Spleen (tissue), 13 donors: ENCODE measurements at regions of chr1 and their contacts with region 1.

Region 1: GRCh38 chr1:29793101-29793546 is 556.8 kb downstream of the PTPRU start:
- DNase-seq: no peak
- H3K4me3 ChIP-seq: no peak overlapping the region
- H3K27ac ChIP-seq: no peak overlapping the region
- H3K4me1 ChIP-seq: no peaks in the 10 kb centered on the region
- H3K27me3 ChIP-seq: peaks cover 0 to 32% (median 0%) of the 10 kb centered on the region in 7 donors
- CTCF ChIP-seq: peak; percentile 27 to 72 (median 57)
- POLR2A ChIP-seq: no peak

Region 2: DNA sequence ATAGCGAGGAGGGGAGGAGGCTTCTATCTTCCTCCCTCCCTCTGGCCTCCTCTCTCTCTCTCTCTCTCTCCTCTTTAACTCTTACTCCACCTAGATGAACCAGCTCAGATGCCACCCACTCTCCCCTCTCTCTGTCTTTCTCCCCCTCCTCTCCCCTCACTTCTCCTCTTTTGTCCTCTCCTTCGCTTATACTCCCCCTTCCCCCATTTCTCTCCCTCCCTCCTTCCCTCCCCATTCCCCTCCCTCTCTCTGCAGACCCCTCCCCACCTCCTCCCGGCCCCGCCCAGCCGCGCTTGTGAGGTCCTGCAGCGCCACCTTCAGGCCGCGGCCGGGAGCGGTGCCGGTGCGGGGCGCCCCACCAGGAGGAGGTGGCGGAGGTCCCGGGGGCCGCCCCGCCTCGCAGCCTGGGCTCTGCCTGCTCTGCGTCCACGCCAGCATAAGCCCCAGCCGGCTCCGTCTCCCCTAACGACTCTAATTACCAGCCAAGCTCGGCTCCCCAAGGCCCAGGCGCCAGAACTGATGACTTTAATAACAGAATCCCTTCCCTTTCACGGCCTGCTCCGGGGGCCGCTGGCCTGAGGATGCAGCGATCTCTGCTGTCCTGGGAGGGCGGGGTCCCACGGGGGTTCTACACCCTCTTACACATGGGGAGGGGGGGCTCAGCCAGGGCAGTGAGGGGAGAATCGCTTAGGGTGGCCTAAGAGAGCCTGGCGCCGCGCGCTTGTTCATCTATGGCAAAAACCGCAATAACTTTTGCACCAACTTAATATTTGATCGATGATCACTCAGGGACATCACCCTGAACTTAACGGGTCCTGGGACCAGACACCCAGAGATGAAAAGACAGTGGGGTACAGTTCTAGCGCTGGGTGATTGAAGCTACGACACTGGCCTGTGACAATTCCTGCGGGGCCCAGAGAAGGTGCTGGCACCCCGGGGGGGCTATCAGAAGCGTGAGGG is 293.0 kb after region 1 on chr1:
- intact Hi-C with region 1: loop called (anchors 10 kb)
- DNase-seq: no peak
- H3K4me3 ChIP-seq: no peak overlapping the region
- H3K27ac ChIP-seq: no peak overlapping the region
- H3K4me1 ChIP-seq: peaks cover 3 to 35% (median 16%) of the 10 kb centered on the region in 6 donors
- H3K27me3 ChIP-seq: peaks cover 0 to 90% (median 10%) of the 10 kb centered on the region in 7 donors
- CTCF ChIP-seq: peak in 10 of 11 experiments; percentile 13 to 65 (median 48)
- POLR2A ChIP-seq: no peak

Region 3: GRCh38 chr1:30707412-30708360 is 914.6 kb after region 1 on chr1:
- intact Hi-C with region 1: loop called (anchors 10 kb)
- DNase-seq: peak; percentile 86
- H3K4me3 ChIP-seq: no peak overlapping the region
- H3K27ac ChIP-seq: no peak overlapping the region
- H3K4me1 ChIP-seq: peaks cover 0 to 10% (median 6%) of the 10 kb centered on the region in 6 donors
- H3K27me3 ChIP-seq: peaks cover 0 to 33% (median 0%) of the 10 kb centered on the region in 7 donors
- CTCF ChIP-seq: peak; percentile 78 to 91 (median 85)
- POLR2A ChIP-seq: no peak